HepG2 (cell line): ENCODE measurements at regions of chrX and their contacts with region 1.

Region 1: GRCh38 chrX:45515262-45516215 is 314.9 kb upstream of the DIPK2B start:
- DNase-seq: peak; percentile 71
- ATAC-seq: peak; percentile 85
- H3K4me3 ChIP-seq: peak overlapping the region in 1 of 3 experiments; percentile 37; a peak in 3 of 6 replicates
- H3K27ac ChIP-seq: no peak overlapping the region
- H3K4me1 ChIP-seq: peaks cover 21% of the 10 kb centered on the region
- H3K27me3 ChIP-seq: no peaks in the 10 kb centered on the region
- CTCF ChIP-seq: peak; percentile 67
- EP300 ChIP-seq: no peak; a peak in 1 of 4 replicates
- POLR2A ChIP-seq: no peak
- RAD21 ChIP-seq: peak; percentile 33

Region 2: GRCh38 chrX:45571453-45571852 is 55.9 kb after region 1 on chrX:
- CTCF ChIA-PET with region 1: no interaction called
- POLR2A ChIA-PET with region 1: no interaction called
- in situ Hi-C with region 1: no loop called
- intact Hi-C with region 1: no loop called
- DNase-seq: no peak
- ATAC-seq: no peak
- H3K4me3 ChIP-seq: no peak overlapping the region
- H3K27ac ChIP-seq: no peak overlapping the region
- H3K4me1 ChIP-seq: no peaks in the 10 kb centered on the region
- H3K27me3 ChIP-seq: no peaks in the 10 kb centered on the region
- CTCF ChIP-seq: no peak
- EP300 ChIP-seq: no peak
- POLR2A ChIP-seq: no peak
- RAD21 ChIP-seq: no peak

Region 3: DNA sequence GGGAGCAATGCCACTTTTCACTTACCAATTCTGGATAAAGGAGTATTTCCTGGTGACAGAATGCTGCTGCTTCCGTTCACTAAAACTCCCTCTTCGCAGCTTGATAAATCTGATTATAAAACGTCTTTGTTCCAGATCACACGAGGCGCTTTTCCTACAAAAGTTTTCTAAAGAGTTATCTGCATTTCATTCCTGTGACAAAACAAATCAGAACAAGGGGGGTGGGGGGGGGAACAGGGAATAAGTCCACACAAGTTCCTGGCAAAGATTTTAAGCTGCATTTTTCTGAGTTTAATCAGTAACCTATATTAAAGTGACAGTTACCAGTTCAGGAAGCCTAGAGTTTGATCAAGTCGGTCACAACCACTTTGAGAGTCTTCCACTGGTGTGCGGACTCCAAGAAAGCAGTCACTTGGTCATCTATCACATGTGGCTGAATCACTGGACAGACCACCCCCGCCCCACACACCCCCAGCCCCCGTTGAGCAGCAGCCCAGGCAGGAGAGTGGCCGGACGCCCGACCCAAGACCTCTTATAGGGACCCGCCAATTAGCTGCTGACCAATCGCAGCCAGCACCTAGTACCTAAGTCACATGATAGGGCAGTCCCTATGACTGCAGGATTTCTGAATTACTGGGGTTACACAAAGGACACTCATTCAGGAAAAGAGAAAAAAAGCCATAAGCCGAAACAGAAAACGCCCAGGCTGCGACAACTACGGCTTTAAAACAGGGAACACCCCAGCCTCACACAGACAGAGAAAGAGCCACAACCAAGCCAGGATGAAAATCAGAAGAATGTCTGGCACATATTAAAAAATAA is 254.4 kb after region 1 on chrX:
- CTCF ChIA-PET with region 1: no interaction called
- POLR2A ChIA-PET with region 1: no interaction called
- in situ Hi-C with region 1: loop called (anchors 25 kb)
- intact Hi-C with region 1: no loop called
- DNase-seq: peak; percentile 88
- ATAC-seq: peak; percentile 99
- H3K4me3 ChIP-seq: peak overlapping the region; percentile 57 to 62 (median 57)
- H3K27ac ChIP-seq: peak overlapping the region; percentile 74
- H3K4me1 ChIP-seq: peaks cover 29% of the 10 kb centered on the region
- H3K27me3 ChIP-seq: no peaks in the 10 kb centered on the region
- CTCF ChIP-seq: no peak
- EP300 ChIP-seq: no peak
- POLR2A ChIP-seq: peak in 1 of 2 experiments; percentile 33; a peak in 2 of 4 replicates
- RAD21 ChIP-seq: no peak

Region 4: GRCh38 chrX:45843518-45843917 is 328.0 kb after region 1 on chrX:
- CTCF ChIA-PET with region 1: no interaction called
- POLR2A ChIA-PET with region 1: no interaction called
- in situ Hi-C with region 1: no loop called
- intact Hi-C with region 1: loop called (anchors 2 kb)
- DNase-seq: no peak
- ATAC-seq: no peak
- H3K4me3 ChIP-seq: no peak overlapping the region
- H3K27ac ChIP-seq: no peak overlapping the region
- H3K4me1 ChIP-seq: no peaks in the 10 kb centered on the region
- H3K27me3 ChIP-seq: no peaks in the 10 kb centered on the region
- CTCF ChIP-seq: no peak
- EP300 ChIP-seq: no peak
- POLR2A ChIP-seq: no peak
- RAD21 ChIP-seq: no peak

Region 5: GRCh38 chrX:45849253-45849862 is 333.8 kb after region 1 on chrX:
- CTCF ChIA-PET with region 1: no interaction called
- POLR2A ChIA-PET with region 1: no interaction called
- in situ Hi-C with region 1: no loop called
- intact Hi-C with region 1: loop called (anchors 1 kb)
- DNase-seq: peak; percentile 61
- ATAC-seq: no peak
- H3K4me3 ChIP-seq: peak overlapping the region; percentile 68 to 77 (median 75); a peak in 5 of 6 replicates
- H3K27ac ChIP-seq: no peak overlapping the region
- H3K4me1 ChIP-seq: peaks cover 6% of the 10 kb centered on the region; the same call in 1 of the 2 replicates
- H3K27me3 ChIP-seq: no peaks in the 10 kb centered on the region; a peak in 1 of 5 replicates
- CTCF ChIP-seq: peak; percentile 42
- EP300 ChIP-seq: no peak
- POLR2A ChIP-seq: no peak
- RAD21 ChIP-seq: no peak

Region 6: DNA sequence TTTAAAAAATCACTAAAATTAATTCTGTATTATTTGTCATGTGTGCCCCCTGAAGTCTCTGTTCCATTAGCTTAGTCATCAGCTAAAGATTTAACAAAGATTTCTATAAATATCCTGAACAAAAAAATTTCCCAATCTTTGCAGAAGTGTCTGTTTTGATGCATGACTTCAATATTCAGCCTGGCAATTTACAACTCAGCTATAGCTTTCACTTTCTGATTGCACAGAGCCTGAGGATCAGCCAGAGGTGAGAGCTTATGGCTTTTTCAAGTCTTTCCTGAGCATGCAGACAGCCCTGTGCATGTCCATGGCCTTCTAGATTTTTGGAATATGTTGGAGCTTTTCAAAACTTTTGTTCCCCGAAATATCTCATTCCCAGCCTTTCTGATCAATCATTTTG is 609.6 kb after region 1 on chrX:
- CTCF ChIA-PET with region 1: no interaction called
- POLR2A ChIA-PET with region 1: no interaction called
- in situ Hi-C with region 1: no loop called
- intact Hi-C with region 1: no loop called
- DNase-seq: no peak
- ATAC-seq: no peak
- H3K4me3 ChIP-seq: no peak overlapping the region
- H3K27ac ChIP-seq: no peak overlapping the region
- H3K4me1 ChIP-seq: no peaks in the 10 kb centered on the region
- H3K27me3 ChIP-seq: no peaks in the 10 kb centered on the region
- CTCF ChIP-seq: no peak
- EP300 ChIP-seq: no peak
- POLR2A ChIP-seq: no peak
- RAD21 ChIP-seq: no peak

Region 7: DNA sequence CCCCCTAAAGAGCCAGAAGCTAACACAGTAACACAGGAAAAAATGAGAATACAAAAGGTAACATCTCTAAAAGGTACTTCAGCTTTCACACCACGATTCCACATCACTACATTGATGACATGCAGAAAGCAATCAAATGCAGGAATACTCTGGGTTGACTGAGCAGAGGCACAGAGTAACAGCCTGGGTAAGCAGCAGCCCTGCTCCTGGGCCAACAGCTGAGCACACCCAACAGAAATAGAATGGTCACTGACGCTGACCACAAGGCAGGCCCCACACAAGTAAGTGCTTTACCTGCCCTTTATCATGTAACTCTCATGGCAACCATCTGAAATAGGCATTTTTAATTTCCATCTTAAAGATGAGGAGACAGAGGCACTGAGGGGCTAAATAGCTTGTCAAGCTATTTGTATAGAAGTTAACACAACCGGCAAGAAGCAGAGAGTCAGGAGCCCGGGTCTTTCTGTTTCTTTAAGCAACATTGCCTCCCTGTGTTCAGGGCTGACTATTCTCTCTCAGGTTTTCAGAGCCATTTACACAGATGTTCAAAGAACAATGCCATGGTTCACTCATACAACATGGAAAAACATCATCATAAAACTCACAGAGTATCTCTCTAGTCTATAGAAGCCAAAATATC is 860.8 kb after region 1 on chrX:
- CTCF ChIA-PET with region 1: no interaction called
- POLR2A ChIA-PET with region 1: no interaction called
- in situ Hi-C with region 1: loop called (anchors 25 kb)
- intact Hi-C with region 1: no loop called
- DNase-seq: peak; percentile 57
- ATAC-seq: peak; percentile 80
- H3K4me3 ChIP-seq: no peak overlapping the region
- H3K27ac ChIP-seq: no peak overlapping the region
- H3K4me1 ChIP-seq: peaks cover 19% of the 10 kb centered on the region
- H3K27me3 ChIP-seq: no peaks in the 10 kb centered on the region
- CTCF ChIP-seq: peak; percentile 67
- EP300 ChIP-seq: no peak
- POLR2A ChIP-seq: no peak
- RAD21 ChIP-seq: peak; percentile 66

Region 8: GRCh38 chrX:46408553-46409407 is 893.2 kb after region 1 on chrX:
- CTCF ChIA-PET with region 1: no interaction called
- POLR2A ChIA-PET with region 1: no interaction called
- in situ Hi-C with region 1: no loop called
- intact Hi-C with region 1: loop called (anchors 10 kb)
- DNase-seq: peak; percentile 18
- ATAC-seq: no peak
- H3K4me3 ChIP-seq: no peak overlapping the region
- H3K27ac ChIP-seq: no peak overlapping the region
- H3K4me1 ChIP-seq: no peaks in the 10 kb centered on the region
- H3K27me3 ChIP-seq: no peaks in the 10 kb centered on the region; a peak in 1 of 5 replicates
- CTCF ChIP-seq: peak; percentile 75
- EP300 ChIP-seq: no peak
- POLR2A ChIP-seq: no peak
- RAD21 ChIP-seq: peak; percentile 68; the same call in 1 of the 2 replicates